ENCODE measurements at regions of chr17 and their contacts with region 1.

Region 1: GRCh38 chr17:62109378-62109902 is 44.4 kb upstream of the MED13 start:
- DNase-seq: peak; percentile 86 to 93 (median 89)
- ATAC-seq: peak; percentile 100
- H3K4me3 ChIP-seq: no peak overlapping the region
- H3K27ac ChIP-seq: no peak overlapping the region
- H3K4me1 ChIP-seq: peaks cover 0 to 12% of the 10 kb centered on the region in 2 experiments; a peak in 2 of 5 replicates
- H3K27me3 ChIP-seq: no peaks in the 10 kb centered on the region
- CTCF ChIP-seq: peak; percentile 99 to 100 (median 99)
- EP300 ChIP-seq: peak; percentile 28; the same call in 1 of the 2 replicates
- POLR2A ChIP-seq: no peak
- RAD21 ChIP-seq: peak; percentile 98 to 100

Region 2: GRCh38 chr17:61412143-61412859 is 697.1 kb before region 1 on chr17:
- CTCF ChIA-PET with region 1: no interaction called
- POLR2A ChIA-PET with region 1: no interaction called
- in situ Hi-C with region 1: no loop called
- intact Hi-C with region 1: loop called (anchors 5 kb)
- DNase-seq: peak; percentile 57 to 84 (median 82)
- ATAC-seq: peak; percentile 83
- H3K4me3 ChIP-seq: peak overlapping the region; percentile 4
- H3K27ac ChIP-seq: no peak overlapping the region
- H3K4me1 ChIP-seq: peaks cover 0 to 45% of the 10 kb centered on the region in 2 experiments; a peak in 4 of 5 replicates
- H3K27me3 ChIP-seq: peaks cover 8 to 17% of the 10 kb centered on the region in 2 experiments; a peak in 3 of 5 replicates
- CTCF ChIP-seq: peak; percentile 84 to 88 (median 85)
- EP300 ChIP-seq: no peak
- POLR2A ChIP-seq: no peak
- RAD21 ChIP-seq: peak; percentile 82 to 90

Region 3: GRCh38 chr17:61426013-61426730 is 683.3 kb before region 1 on chr17:
- CTCF ChIA-PET with region 1: no interaction called
- POLR2A ChIA-PET with region 1: no interaction called
- in situ Hi-C with region 1: loop called (anchors 25 kb)
- intact Hi-C with region 1: no loop called
- DNase-seq: peak in 2 of 4 experiments; percentile 1 to 24
- ATAC-seq: peak; percentile 71
- H3K4me3 ChIP-seq: no peak overlapping the region
- H3K27ac ChIP-seq: no peak overlapping the region
- H3K4me1 ChIP-seq: no peaks in the 10 kb centered on the region
- H3K27me3 ChIP-seq: peaks cover 4 to 11% of the 10 kb centered on the region in 2 experiments; a peak in 3 of 5 replicates
- CTCF ChIP-seq: peak; percentile 38 to 53 (median 47); a peak in 5 of 6 replicates
- EP300 ChIP-seq: no peak
- POLR2A ChIP-seq: no peak
- RAD21 ChIP-seq: peak in 1 of 2 experiments; percentile 50; a peak in 2 of 4 replicates

Region 4: GRCh38 chr17:61635913-61636432 is 473.5 kb before region 1 on chr17:
- CTCF ChIA-PET with region 1: interaction called, 6 read pairs
- POLR2A ChIA-PET with region 1: no interaction called
- in situ Hi-C with region 1: loop called (anchors 5 kb)
- intact Hi-C with region 1: loop called (anchors 1 kb)
- DNase-seq: peak; percentile 14 to 68 (median 16)
- ATAC-seq: peak; percentile 54; the same call in 1 of the 3 replicates
- H3K4me3 ChIP-seq: no peak overlapping the region
- H3K27ac ChIP-seq: no peak overlapping the region
- H3K4me1 ChIP-seq: no peaks in the 10 kb centered on the region
- H3K27me3 ChIP-seq: no peaks in the 10 kb centered on the region; a peak in 1 of 5 replicates
- CTCF ChIP-seq: peak; percentile 66 to 78 (median 71); a peak in 5 of 6 replicates
- EP300 ChIP-seq: no peak
- POLR2A ChIP-seq: no peak
- RAD21 ChIP-seq: peak; percentile 74 to 93

Region 5: DNA sequence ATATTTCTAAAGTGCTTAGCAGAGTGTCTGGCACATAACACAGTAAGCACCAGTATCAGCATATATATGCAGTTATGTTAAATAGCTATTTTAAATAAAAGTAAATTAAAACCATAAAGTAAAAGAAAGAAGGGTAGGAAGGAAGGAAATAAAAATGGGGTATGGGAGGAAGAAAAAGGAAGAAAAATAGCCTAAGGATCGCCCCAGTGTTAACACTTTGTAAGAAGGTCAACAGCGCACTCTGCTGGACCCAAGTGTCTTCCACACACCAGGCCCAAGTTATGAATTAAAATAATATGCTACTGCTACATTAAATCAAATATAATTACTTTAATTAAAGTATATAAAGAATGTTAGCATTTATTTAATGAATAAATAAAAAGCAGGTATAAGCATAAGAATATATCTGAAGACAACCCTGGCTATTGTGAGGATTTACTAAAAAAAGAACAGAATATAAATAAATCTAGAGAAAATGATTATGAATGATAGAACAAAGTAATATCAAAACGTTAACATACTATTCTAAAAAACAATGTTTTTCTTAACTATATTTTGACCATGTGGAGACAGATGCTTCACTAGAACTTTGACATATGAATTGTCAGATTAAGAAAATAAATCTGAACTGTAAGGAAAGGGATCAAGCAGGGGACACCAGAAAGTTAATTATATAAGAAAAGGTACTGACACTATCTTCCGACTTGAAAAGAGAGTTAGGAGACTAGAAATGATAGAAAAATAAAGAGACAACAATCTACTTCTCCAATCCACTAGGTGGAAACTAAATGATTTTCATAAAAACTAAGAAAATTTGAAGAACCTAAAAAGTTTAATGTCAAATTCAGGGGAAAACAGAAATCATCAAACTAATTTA is 272.0 kb before region 1 on chr17:
- CTCF ChIA-PET with region 1: no interaction called
- POLR2A ChIA-PET with region 1: no interaction called
- in situ Hi-C with region 1: no loop called
- intact Hi-C with region 1: loop called (anchors 10 kb)
- DNase-seq: peak; percentile 40 to 77 (median 45)
- ATAC-seq: peak; percentile 91
- H3K4me3 ChIP-seq: no peak overlapping the region
- H3K27ac ChIP-seq: no peak overlapping the region
- H3K4me1 ChIP-seq: no peaks in the 10 kb centered on the region
- H3K27me3 ChIP-seq: no peaks in the 10 kb centered on the region
- CTCF ChIP-seq: peak; percentile 63 to 85 (median 73)
- EP300 ChIP-seq: no peak
- POLR2A ChIP-seq: no peak
- RAD21 ChIP-seq: peak; percentile 75 to 86

Region 6: GRCh38 chr17:62065598-62066468 is 43.6 kb before region 1 on chr17:
- CTCF ChIA-PET with region 1: interaction called, 3 read pairs
- POLR2A ChIA-PET with region 1: interaction called, 5 read pairs
- in situ Hi-C with region 1: no loop called
- intact Hi-C with region 1: loop called (anchors 5 kb)
- DNase-seq: peak; percentile 98 to 99 (median 98)
- ATAC-seq: peak; percentile 96
- H3K4me3 ChIP-seq: peak overlapping the region; percentile 86
- H3K27ac ChIP-seq: peak overlapping the region; percentile 99
- H3K4me1 ChIP-seq: peaks cover 4 to 10% of the 10 kb centered on the region in 2 experiments; a peak in 3 of 5 replicates
- H3K27me3 ChIP-seq: no peaks in the 10 kb centered on the region
- CTCF ChIP-seq: peak; percentile 85 to 94 (median 91)
- EP300 ChIP-seq: no peak; the same call in 1 of the 2 replicates
- POLR2A ChIP-seq: peak; percentile 95
- RAD21 ChIP-seq: peak; percentile 55 to 67

Region 7: GRCh38 chr17:62134397-62134796 is 25.0 kb after region 1 on chr17:
- CTCF ChIA-PET with region 1: no interaction called
- POLR2A ChIA-PET with region 1: no interaction called
- in situ Hi-C with region 1: no loop called
- intact Hi-C with region 1: no loop called
- DNase-seq: no peak
- ATAC-seq: no peak
- H3K4me3 ChIP-seq: no peak overlapping the region
- H3K27ac ChIP-seq: no peak overlapping the region
- H3K4me1 ChIP-seq: no peaks in the 10 kb centered on the region
- H3K27me3 ChIP-seq: no peaks in the 10 kb centered on the region
- CTCF ChIP-seq: no peak
- EP300 ChIP-seq: no peak
- POLR2A ChIP-seq: no peak
- RAD21 ChIP-seq: no peak

Region 8: GRCh38 chr17:62179534-62180151 is 70.2 kb after region 1 on chr17:
- CTCF ChIA-PET with region 1: no interaction called
- POLR2A ChIA-PET with region 1: no interaction called
- in situ Hi-C with region 1: no loop called
- intact Hi-C with region 1: loop called (anchors 1 kb)
- DNase-seq: peak; percentile 40 to 85 (median 60)
- ATAC-seq: peak; percentile 83
- H3K4me3 ChIP-seq: no peak overlapping the region
- H3K27ac ChIP-seq: peak overlapping the region; percentile 75; the same call in 2 of the 3 replicates
- H3K4me1 ChIP-seq: peaks cover 0 to 17% of the 10 kb centered on the region in 2 experiments; a peak in 2 of 5 replicates
- H3K27me3 ChIP-seq: no peaks in the 10 kb centered on the region
- CTCF ChIP-seq: peak in 2 of 3 experiments; percentile 34 to 65; a peak in 2 of 6 replicates
- EP300 ChIP-seq: peak; percentile 89
- POLR2A ChIP-seq: no peak
- RAD21 ChIP-seq: peak; percentile 65 to 90

Region 9: GRCh38 chr17:62219221-62219899 is 109.9 kb after region 1 on chr17:
- CTCF ChIA-PET with region 1: no interaction called
- POLR2A ChIA-PET with region 1: no interaction called
- in situ Hi-C with region 1: no loop called
- intact Hi-C with region 1: no loop called
- DNase-seq: no peak
- ATAC-seq: no peak
- H3K4me3 ChIP-seq: no peak overlapping the region
- H3K27ac ChIP-seq: no peak overlapping the region
- H3K4me1 ChIP-seq: peaks cover 0 to 4% of the 10 kb centered on the region in 2 experiments; a peak in 2 of 5 replicates
- H3K27me3 ChIP-seq: no peaks in the 10 kb centered on the region
- CTCF ChIP-seq: no peak
- EP300 ChIP-seq: no peak
- POLR2A ChIP-seq: no peak
- RAD21 ChIP-seq: no peak